Natural killer cell (primary cell): ENCODE measurements at regions of chr1 and their contacts with region 1.

Region 1: DNA sequence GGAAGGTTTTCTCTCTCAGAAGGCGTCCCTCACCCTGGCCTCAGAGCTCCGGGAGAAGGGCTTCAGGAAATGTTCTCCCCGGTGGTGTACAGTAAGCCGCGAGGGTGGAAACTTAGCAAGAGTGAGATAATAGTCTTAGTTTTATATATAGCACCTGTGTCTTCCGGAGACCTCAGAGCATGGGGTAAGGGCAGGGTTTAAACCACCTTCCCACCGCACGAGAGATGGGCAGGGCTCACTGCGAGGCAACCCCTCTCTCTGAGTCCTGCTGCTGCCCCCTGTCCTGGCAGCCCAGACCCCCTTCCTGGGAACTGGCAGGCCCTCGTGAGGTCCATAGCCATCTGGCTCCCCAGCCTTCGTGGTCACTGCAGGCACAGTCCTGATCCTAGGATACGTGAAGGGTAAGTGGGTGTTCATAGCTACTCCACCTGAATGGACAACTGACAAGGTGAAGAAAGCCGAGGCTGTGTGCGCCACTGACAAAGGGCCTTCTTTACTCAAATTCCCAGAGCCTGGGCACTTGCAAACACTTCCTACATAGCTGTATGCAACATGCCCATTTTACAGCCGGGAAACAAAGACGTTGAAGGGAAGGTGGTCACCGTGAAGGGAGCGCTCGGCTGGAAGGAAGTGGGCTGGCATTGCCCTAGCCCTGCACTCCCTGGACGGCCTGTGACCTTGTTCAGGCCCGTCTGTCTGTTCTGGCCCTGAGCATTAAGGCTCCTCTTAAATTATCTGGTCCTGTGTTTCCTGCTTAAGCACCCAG is 26.9 kb downstream of the ITPKB start:
- DNase-seq: peak; percentile 50 to 78
- ATAC-seq: peak; percentile 60 to 67 (median 67)
- H3K4me3 ChIP-seq: no peak overlapping the region
- H3K4me3 Mint-ChIP-seq: peak overlapping the region; percentile 77
- H3K27ac ChIP-seq: peak overlapping the region; percentile 64
- H3K27ac Mint-ChIP-seq: peak overlapping the region; percentile 78 to 91
- H3K4me1 ChIP-seq: peaks cover 66% of the 10 kb centered on the region
- H3K4me1 Mint-ChIP-seq: peaks cover 86 to 88% of the 10 kb centered on the region in 2 donors
- H3K27me3 ChIP-seq: no peaks in the 10 kb centered on the region
- H3K27me3 Mint-ChIP-seq: no peaks in the 10 kb centered on the region
- CTCF ChIP-seq: no peak

Region 2: DNA sequence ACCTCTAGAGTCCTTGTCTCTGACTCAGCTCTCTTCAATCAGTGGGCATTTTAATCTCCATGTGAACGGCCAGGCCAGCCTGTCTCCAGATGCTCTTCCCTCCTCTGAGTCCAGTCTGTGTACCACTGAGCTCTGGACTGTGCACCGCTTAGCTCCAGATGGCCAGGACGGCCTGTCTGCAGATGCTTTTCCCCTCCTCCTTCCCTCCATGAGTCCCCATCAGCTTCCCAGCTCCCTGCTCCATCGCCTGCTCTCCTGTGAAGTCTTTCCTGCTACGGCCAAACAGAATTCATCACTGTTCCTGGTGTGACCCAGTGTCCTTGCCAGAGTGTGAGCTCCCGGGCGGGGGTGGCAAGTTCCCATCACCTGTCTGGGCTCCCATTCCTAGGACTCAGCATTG is 121.5 kb before region 1 on chr1:
- intact Hi-C with region 1: no loop called
- DNase-seq: no peak
- ATAC-seq: no peak
- H3K4me3 ChIP-seq: no peak overlapping the region
- H3K4me3 Mint-ChIP-seq: no peak overlapping the region
- H3K27ac ChIP-seq: no peak overlapping the region
- H3K27ac Mint-ChIP-seq: no peak overlapping the region
- H3K4me1 ChIP-seq: no peaks in the 10 kb centered on the region
- H3K4me1 Mint-ChIP-seq: no peaks in the 10 kb centered on the region
- H3K27me3 ChIP-seq: no peaks in the 10 kb centered on the region
- H3K27me3 Mint-ChIP-seq: peaks cover 8% of the 10 kb centered on the region in 2 donors
- CTCF ChIP-seq: no peak

Region 3: GRCh38 chr1:226687426-226687825 is 24.7 kb before region 1 on chr1:
- intact Hi-C with region 1: no loop called
- DNase-seq: peak; percentile 52 to 78
- ATAC-seq: peak; percentile 66 to 78 (median 78)
- H3K4me3 ChIP-seq: no peak overlapping the region
- H3K4me3 Mint-ChIP-seq: no peak overlapping the region
- H3K27ac ChIP-seq: peak overlapping the region; percentile 26
- H3K27ac Mint-ChIP-seq: peak overlapping the region; percentile 97 to 99
- H3K4me1 ChIP-seq: peaks cover 79% of the 10 kb centered on the region
- H3K4me1 Mint-ChIP-seq: peaks cover 94 to 98% of the 10 kb centered on the region in 2 donors
- H3K27me3 ChIP-seq: no peaks in the 10 kb centered on the region
- H3K27me3 Mint-ChIP-seq: no peaks in the 10 kb centered on the region
- CTCF ChIP-seq: peak; percentile 65

Region 4: GRCh38 chr1:226731257-226731893 is 19.2 kb after region 1 on chr1:
- intact Hi-C with region 1: loop called (anchors 2 kb)
- DNase-seq: peak in 1 of 2 donors; percentile 37
- ATAC-seq: no peak
- H3K4me3 ChIP-seq: no peak overlapping the region
- H3K4me3 Mint-ChIP-seq: peak overlapping the region; percentile 87
- H3K27ac ChIP-seq: peak overlapping the region; percentile 6
- H3K27ac Mint-ChIP-seq: peak overlapping the region; percentile 84 to 86
- H3K4me1 ChIP-seq: peaks cover 69% of the 10 kb centered on the region
- H3K4me1 Mint-ChIP-seq: peaks cover 86 to 93% of the 10 kb centered on the region in 2 donors
- H3K27me3 ChIP-seq: no peaks in the 10 kb centered on the region
- H3K27me3 Mint-ChIP-seq: no peaks in the 10 kb centered on the region
- CTCF ChIP-seq: no peak

Region 5: GRCh38 chr1:226772446-226773139 is 60.4 kb after region 1 on chr1:
- intact Hi-C with region 1: no loop called
- DNase-seq: no peak
- ATAC-seq: no peak
- H3K4me3 ChIP-seq: no peak overlapping the region
- H3K4me3 Mint-ChIP-seq: no peak overlapping the region
- H3K27ac ChIP-seq: no peak overlapping the region
- H3K27ac Mint-ChIP-seq: no peak overlapping the region
- H3K4me1 ChIP-seq: peaks cover 3% of the 10 kb centered on the region
- H3K4me1 Mint-ChIP-seq: peaks cover 0 to 5% of the 10 kb centered on the region in 2 donors
- H3K27me3 ChIP-seq: no peaks in the 10 kb centered on the region
- H3K27me3 Mint-ChIP-seq: peaks cover 0 to 5% of the 10 kb centered on the region in 2 donors
- CTCF ChIP-seq: no peak

Region 6: GRCh38 chr1:226798427-226799411 is 86.6 kb after region 1 on chr1:
- intact Hi-C with region 1: loop called (anchors 5 kb)
- DNase-seq: peak; percentile 49 to 80
- ATAC-seq: peak; percentile 80 to 94 (median 82)
- H3K4me3 ChIP-seq: no peak overlapping the region
- H3K4me3 Mint-ChIP-seq: peak overlapping the region; percentile 72
- H3K27ac ChIP-seq: peak overlapping the region; percentile 79
- H3K27ac Mint-ChIP-seq: peak overlapping the region; percentile 92 to 97
- H3K4me1 ChIP-seq: peaks cover 33% of the 10 kb centered on the region
- H3K4me1 Mint-ChIP-seq: peaks cover 32 to 34% of the 10 kb centered on the region in 2 donors
- H3K27me3 ChIP-seq: no peaks in the 10 kb centered on the region
- H3K27me3 Mint-ChIP-seq: no peaks in the 10 kb centered on the region
- CTCF ChIP-seq: no peak

Region 7: GRCh38 chr1:227077783-227078182 is 365.6 kb after region 1 on chr1:
- intact Hi-C with region 1: no loop called
- DNase-seq: no peak
- ATAC-seq: no peak
- H3K4me3 ChIP-seq: no peak overlapping the region
- H3K4me3 Mint-ChIP-seq: no peak overlapping the region
- H3K27ac ChIP-seq: no peak overlapping the region
- H3K27ac Mint-ChIP-seq: no peak overlapping the region
- H3K4me1 ChIP-seq: no peaks in the 10 kb centered on the region
- H3K4me1 Mint-ChIP-seq: no peaks in the 10 kb centered on the region
- H3K27me3 ChIP-seq: peaks cover 2% of the 10 kb centered on the region
- H3K27me3 Mint-ChIP-seq: peaks cover 8 to 28% of the 10 kb centered on the region in 2 donors
- CTCF ChIP-seq: no peak